ENCODE measurements at regions of chr10 and their contacts with region 1.

Region 1: GRCh38 chr10:33674986-33675599 is 340.6 kb upstream of the NRP1 start:
- DNase-seq: no peak
- H3K4me3 ChIP-seq: peak overlapping the region; percentile 20
- H3K27ac ChIP-seq: no peak overlapping the region
- H3K27me3 ChIP-seq: no peaks in the 10 kb centered on the region
- CTCF ChIP-seq: no peak

Region 2: GRCh38 chr10:34430685-34431084 is 755.6 kb after region 1 on chr10:
- CTCF ChIA-PET with region 1: interaction called, 11 read pairs
- POLR2A ChIA-PET with region 1: no interaction called
- DNase-seq: no peak
- H3K4me3 ChIP-seq: no peak overlapping the region
- H3K27ac ChIP-seq: no peak overlapping the region
- H3K27me3 ChIP-seq: no peaks in the 10 kb centered on the region
- CTCF ChIP-seq: no peak

Measured in AG04450 (cell line).